ENCODE measurements at regions of chr11 and their contacts with region 1.

Region 1: DNA sequence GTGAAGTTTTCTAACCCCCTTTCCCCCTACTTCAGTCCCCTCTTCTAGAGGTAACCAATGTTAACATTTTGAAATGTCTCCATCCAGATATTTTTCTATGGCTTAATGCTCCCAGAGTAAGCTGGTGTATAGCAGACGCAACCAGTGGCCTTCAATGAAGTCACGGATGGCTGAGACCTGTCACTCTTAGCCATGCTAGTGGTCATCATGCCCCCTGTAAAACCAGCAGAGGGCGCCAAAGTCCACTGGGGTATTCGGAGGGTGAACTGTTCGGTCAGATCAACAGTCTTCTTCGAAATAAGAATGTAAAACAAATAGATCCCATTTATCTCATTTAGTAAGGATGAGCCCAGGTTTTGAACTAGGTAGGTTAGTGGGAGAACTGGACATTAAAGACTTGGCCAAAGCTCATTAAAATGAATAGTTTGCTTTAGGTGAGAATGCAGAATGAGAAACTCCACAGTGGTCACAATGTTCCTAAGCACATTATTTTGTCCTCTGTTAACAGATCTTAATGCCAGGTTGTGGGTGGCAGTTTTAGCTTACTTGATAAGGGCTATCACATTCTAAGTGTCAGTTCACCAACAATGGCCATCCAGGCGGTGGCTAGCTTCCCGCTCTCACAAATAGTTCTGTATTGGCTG is 8.6 kb upstream of the MMP8 start:
- DNase-seq: peak; percentile 77
- H3K4me3 Mint-ChIP-seq: no peak overlapping the region
- H3K27ac Mint-ChIP-seq: no peak overlapping the region
- H3K4me1 Mint-ChIP-seq: no peaks in the 10 kb centered on the region
- H3K27me3 Mint-ChIP-seq: peaks cover 4% of the 10 kb centered on the region

Region 2: DNA sequence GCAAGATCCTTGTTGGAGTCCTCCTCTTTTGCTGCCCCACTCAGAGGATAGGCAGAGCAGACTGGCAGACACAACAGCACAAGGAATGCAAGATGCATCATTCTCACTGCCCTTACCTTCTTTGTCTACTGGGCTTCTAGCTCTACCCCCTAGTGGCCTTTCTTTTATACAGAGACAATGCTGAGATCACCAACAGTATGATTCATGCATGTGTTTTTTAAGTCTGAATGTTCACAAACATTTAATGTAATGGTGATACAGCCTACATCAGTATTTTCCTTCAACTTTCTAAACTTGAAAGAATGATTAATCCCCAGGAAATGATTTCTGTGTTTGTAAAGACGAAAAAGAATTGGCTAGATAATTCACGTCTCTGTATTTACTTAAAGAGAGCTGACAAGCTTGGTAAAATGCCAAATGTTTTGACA is 47.2 kb after region 1 on chr11 and contains the start of gene MMP10:
- CTCF ChIA-PET with region 1: interaction called, 3 read pairs
- intact Hi-C with region 1: loop called (anchors 2 kb)
- DNase-seq: no peak
- H3K4me3 Mint-ChIP-seq: no peak within 1 kb of the TSS
- H3K27ac Mint-ChIP-seq: no peak within 1 kb of the TSS
- H3K4me1 Mint-ChIP-seq: no peaks in the 10 kb centered on the region
- H3K27me3 Mint-ChIP-seq: no peaks in the 10 kb centered on the region
- total RNA-seq, gene MMP10: not detected

Region 3: DNA sequence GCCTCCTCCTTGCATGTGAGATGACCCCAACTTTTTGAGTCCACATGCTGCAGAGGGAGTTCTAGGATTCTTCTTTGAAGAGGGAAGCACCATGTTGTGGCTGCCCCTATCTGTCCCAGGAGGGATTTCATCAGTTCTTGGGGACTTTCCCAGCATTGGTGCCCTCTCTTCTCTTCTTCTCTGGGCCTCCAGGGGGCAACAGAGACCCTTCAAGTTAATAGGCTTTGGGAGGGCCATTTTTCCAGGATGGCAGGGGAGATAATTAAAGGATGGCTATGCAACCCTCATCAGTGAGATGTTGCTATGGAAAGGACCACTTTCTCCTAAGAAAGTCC is 61.1 kb after region 1 on chr11:
- CTCF ChIA-PET with region 1: interaction called, 3 read pairs
- intact Hi-C with region 1: loop called (anchors 5 kb)
- DNase-seq: peak; percentile 54
- H3K4me3 Mint-ChIP-seq: no peak overlapping the region
- H3K27ac Mint-ChIP-seq: no peak overlapping the region
- H3K4me1 Mint-ChIP-seq: no peaks in the 10 kb centered on the region
- H3K27me3 Mint-ChIP-seq: no peaks in the 10 kb centered on the region